ENCODE measurements at regions of chr11 and their contacts with region 1.

Region 1: DNA sequence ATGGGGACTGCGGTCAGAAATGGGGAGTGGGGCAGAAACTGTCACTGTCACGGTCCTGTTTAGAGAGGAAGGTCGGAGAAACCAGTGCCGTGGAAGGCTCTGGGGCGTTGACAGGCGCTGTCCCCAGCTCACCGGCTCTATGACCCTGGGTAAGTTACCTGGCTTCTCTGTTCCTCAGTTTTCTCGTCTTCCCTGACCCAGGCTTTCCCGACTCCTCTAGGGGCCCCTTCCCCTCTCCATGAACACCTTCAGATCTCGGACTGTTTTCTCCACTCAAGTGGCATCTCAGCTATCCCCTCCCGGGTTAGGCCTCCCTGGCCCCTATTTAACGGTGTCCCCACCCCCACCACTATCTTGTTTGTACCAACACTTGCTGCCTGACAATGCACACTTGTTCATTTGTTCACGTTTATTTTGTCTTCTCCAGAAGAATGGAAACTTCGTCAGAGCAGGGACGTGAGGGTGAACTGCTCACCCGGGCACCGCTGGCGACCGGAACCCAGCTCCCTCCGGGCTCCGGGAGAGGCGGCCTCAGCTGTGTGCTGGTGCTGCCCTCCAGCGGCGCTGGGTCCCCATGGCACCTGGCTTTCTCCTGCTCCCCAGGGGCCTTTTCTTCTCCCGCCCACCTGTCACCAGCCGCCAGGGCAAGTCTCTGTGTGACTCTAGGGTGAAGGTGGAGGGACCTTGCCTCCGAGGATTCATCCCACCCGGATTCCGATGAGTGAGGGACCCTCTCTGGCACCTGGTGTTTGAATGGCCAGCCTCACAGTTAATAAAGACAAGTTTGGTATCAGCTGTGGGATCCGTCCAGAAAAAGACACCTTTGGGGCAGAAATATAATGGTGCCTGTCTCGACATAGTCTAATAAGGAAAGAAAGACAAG is 33.1 kb upstream of the SLC35C1 start:
- DNase-seq: peak; percentile 23
- H3K4me3 ChIP-seq: peak overlapping the region; percentile 63
- H3K27ac ChIP-seq: no peak overlapping the region
- H3K27me3 ChIP-seq: peaks cover 8% of the 10 kb centered on the region
- CTCF ChIP-seq: peak; percentile 94

Region 2: GRCh38 chr11:45339729-45340519 is 431.9 kb before region 1 on chr11:
- CTCF ChIA-PET with region 1: interaction called, 15 read pairs
- POLR2A ChIA-PET with region 1: no interaction called
- DNase-seq: peak; percentile 36
- H3K4me3 ChIP-seq: no peak overlapping the region
- H3K27ac ChIP-seq: no peak overlapping the region
- H3K27me3 ChIP-seq: peaks cover 16% of the 10 kb centered on the region
- CTCF ChIP-seq: peak; percentile 72

Region 3: DNA sequence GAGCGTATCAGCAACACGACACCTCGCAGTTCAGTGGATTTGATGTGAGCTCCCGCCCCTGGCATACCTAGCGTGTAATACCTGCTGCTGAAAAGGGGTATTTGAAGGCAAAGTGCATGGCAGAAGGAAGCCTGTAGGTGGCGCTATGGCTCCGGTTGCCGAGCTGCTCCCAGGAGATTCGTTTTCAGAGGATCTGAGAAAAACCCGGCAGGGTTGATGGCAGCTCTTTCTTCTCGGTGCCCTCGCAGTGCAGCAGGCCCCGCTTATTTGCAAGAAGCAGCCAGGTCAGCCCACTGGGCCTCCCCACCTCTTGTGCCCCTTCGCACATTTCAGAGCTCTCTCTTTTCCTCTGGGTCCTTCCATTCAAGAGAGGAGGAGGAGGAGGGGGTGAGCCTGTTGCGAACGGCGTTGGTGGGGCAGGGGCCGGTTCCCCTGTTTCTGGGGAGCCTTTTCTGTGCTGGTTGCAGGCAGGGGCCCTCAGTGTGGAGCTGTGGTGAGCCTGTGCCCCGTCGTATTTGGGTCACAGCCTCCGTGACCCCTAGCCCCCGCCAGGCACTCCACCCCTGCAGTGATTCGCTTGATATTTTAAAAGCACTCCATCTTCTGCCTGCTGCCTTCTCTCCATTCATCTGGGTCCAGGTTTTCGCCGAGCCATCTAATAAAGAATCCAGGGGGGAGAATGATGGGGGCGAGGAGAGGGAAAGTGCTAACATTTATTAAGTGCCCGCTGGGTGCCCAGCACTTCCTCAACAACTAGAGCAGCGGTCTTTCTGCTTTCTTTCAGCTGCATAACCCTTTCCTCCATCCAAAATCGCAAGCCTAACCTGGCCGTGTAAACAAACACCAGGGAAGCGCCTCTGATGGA is 400.3 kb before region 1 on chr11:
- CTCF ChIA-PET with region 1: interaction called, 89 read pairs
- POLR2A ChIA-PET with region 1: no interaction called
- DNase-seq: peak; percentile 7
- H3K4me3 ChIP-seq: no peak overlapping the region
- H3K27ac ChIP-seq: no peak overlapping the region
- H3K27me3 ChIP-seq: peaks cover 12% of the 10 kb centered on the region
- CTCF ChIP-seq: peak; percentile 88

Region 4: GRCh38 chr11:45754261-45754709 is 17.5 kb before region 1 on chr11:
- CTCF ChIA-PET with region 1: interaction called, 25 read pairs
- POLR2A ChIA-PET with region 1: no interaction called
- DNase-seq: no peak
- H3K4me3 ChIP-seq: no peak overlapping the region
- H3K27ac ChIP-seq: no peak overlapping the region
- H3K27me3 ChIP-seq: peaks cover 18% of the 10 kb centered on the region
- CTCF ChIP-seq: no peak

Region 5: GRCh38 chr11:45798793-45799441 is 27.1 kb after region 1 on chr11:
- CTCF ChIA-PET with region 1: interaction called, 61 read pairs
- POLR2A ChIA-PET with region 1: no interaction called
- DNase-seq: no peak
- H3K4me3 ChIP-seq: no peak overlapping the region
- H3K27ac ChIP-seq: no peak overlapping the region
- H3K27me3 ChIP-seq: peaks cover 14% of the 10 kb centered on the region
- CTCF ChIP-seq: no peak

Region 6: GRCh38 chr11:46149342-46149741 is 377.5 kb after region 1 on chr11:
- CTCF ChIA-PET with region 1: no interaction called
- POLR2A ChIA-PET with region 1: no interaction called
- DNase-seq: no peak
- H3K4me3 ChIP-seq: no peak overlapping the region
- H3K27ac ChIP-seq: no peak overlapping the region
- H3K27me3 ChIP-seq: peaks cover 28% of the 10 kb centered on the region
- CTCF ChIP-seq: no peak

Measured in AG04450 (cell line).